Activated naive CD4-positive, alpha-beta T cell treated with anti-CD3 and anti-CD28 coated beads for 36 hours (primary cell): ENCODE measurements at regions of chr13 and their contacts with region 1.

Region 1: GRCh38 chr13:24648990-24649687 is 31.1 kb upstream of the ATP12A start:
- DNase-seq: peak; percentile 65
- H3K4me3 Mint-ChIP-seq: no peak overlapping the region
- H3K27ac Mint-ChIP-seq: peak overlapping the region; percentile 71
- H3K4me1 Mint-ChIP-seq: peaks cover 9% of the 10 kb centered on the region
- H3K27me3 Mint-ChIP-seq: no peaks in the 10 kb centered on the region

Region 2: GRCh38 chr13:24491845-24492244 is 157.3 kb before region 1 on chr13:
- CTCF ChIA-PET with region 1: no interaction called
- intact Hi-C with region 1: no loop called
- DNase-seq: no peak
- H3K4me3 Mint-ChIP-seq: no peak overlapping the region
- H3K27ac Mint-ChIP-seq: no peak overlapping the region
- H3K4me1 Mint-ChIP-seq: no peaks in the 10 kb centered on the region
- H3K27me3 Mint-ChIP-seq: no peaks in the 10 kb centered on the region

Region 3: DNA sequence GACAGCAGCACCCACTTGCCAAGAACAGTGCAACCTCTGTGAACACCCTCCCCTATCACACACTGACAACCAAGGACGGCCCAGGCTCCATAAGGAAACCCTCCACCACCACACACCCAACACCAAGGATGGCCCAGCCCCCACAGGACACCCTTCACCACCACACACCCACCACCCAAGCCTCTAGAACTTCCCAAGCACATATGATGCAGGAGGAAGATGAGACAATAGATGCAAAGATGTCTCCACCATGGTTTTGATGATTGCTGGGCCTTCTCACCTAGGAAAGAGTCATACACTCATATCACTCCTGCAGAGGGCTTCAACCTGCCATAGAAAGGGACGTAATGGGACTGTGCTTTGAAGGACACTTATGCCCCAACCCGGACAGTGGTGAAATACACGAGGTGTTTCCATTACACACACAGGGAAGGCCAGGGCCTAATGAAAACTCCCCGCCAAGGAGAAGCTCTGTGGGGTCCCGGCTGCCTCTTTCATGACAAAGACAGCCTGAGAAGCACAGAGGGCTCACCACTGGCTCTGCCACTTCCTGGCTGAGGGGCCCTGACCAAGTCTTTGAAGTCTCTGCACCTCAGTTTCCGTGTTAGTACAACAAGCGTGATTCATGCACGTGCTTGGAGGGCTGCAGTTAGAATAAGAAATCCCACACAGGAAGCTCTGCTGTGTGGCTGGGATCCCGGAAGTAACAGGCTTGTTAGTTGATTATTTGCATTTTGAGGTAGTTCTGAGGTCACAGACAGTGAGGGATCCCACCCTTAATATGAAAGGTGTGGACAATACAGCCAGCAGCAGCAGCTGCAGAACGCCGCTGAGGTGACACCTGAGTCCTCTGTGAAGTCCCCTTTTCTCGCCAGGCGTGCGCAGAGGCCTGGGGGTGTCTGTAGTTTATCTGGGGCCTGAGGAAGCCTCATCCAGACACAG is 30.9 kb before region 1 on chr13:
- CTCF ChIA-PET with region 1: interaction called, 4 read pairs
- intact Hi-C with region 1: loop called (anchors 1 kb)
- DNase-seq: peak; percentile 86
- H3K4me3 Mint-ChIP-seq: no peak overlapping the region
- H3K27ac Mint-ChIP-seq: peak overlapping the region; percentile 66
- H3K4me1 Mint-ChIP-seq: peaks cover 25% of the 10 kb centered on the region
- H3K27me3 Mint-ChIP-seq: no peaks in the 10 kb centered on the region

Region 4: GRCh38 chr13:24627099-24627714 is 21.9 kb before region 1 on chr13:
- CTCF ChIA-PET with region 1: interaction called, 3 read pairs
- intact Hi-C with region 1: loop called (anchors 1 kb)
- DNase-seq: no peak
- H3K4me3 Mint-ChIP-seq: no peak overlapping the region
- H3K27ac Mint-ChIP-seq: no peak overlapping the region
- H3K4me1 Mint-ChIP-seq: peaks cover 36% of the 10 kb centered on the region
- H3K27me3 Mint-ChIP-seq: no peaks in the 10 kb centered on the region